ENCODE measurements at regions of chr5 and their contacts with region 1.

Region 1: GRCh38 chr5:158174918-158175851 is 316.2 kb upstream of the CLINT1 start:
- DNase-seq: peak; percentile 75
- CTCF ChIP-seq: peak; percentile 89

Region 2: DNA sequence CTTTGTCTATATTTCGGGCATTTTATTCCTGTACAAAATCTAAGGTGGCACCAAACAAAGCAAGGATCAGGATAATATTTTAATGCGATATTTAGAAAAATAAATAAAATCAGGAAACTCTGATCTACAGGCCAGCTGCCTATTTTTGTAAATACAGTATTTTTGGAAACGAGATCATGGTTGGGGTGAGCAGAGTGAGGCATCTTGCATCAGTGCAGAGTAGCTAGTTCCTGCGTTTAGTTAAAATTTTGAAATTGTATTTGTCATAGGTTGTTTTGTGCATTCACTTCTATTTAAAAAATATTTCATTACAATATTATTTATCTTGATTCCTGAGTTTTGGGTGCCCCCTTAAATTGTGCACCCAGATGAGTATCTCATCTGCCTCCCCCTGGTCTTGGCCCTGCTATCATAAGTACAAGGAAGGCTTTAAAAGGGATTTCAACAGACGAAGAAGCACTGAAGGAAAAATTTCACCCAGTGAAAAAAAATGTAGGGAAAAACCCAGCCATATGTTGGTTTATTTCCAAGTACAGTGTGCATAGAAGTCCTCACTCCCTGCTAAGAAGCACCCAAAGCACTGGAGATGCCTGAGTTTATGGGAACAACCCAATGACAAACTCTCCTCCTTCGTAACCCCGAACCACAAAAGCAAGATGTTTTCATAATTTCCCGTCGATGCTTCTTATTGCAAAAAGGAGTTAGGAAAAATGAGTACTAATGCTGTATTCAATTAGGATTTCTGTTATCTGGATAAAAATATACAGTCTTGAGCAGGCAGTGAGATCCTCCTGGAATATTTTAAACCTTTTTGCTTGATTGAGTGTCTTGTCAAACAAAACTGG is 11.5 kb before region 1 on chr5:
- CTCF ChIA-PET with region 1: interaction called, 14 read pairs
- POLR2A ChIA-PET with region 1: no interaction called
- DNase-seq: no peak
- CTCF ChIP-seq: no peak

Region 3: DNA sequence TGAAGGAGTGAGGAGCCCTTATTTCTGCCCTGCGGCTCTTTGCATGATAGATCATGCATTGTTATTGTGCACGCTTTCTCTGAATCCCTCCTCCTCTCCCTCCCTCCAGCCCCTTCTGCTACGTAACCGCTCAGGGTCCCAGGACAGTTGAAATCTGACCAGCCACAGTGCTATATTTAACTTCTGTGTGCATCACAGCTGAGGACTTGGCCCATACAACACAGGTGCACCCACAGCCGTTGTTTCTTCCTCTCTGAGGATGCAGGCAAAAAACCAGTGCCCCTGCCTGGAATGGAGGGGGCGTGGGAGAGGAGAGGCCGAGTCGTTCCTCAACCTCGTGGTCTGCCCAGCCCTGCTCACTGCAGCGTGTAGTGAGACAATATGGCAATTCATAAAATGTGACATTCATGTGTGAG is 19.4 kb after region 1 on chr5:
- CTCF ChIA-PET with region 1: interaction called, 11 read pairs
- POLR2A ChIA-PET with region 1: no interaction called
- DNase-seq: no peak
- CTCF ChIP-seq: no peak

Region 4: DNA sequence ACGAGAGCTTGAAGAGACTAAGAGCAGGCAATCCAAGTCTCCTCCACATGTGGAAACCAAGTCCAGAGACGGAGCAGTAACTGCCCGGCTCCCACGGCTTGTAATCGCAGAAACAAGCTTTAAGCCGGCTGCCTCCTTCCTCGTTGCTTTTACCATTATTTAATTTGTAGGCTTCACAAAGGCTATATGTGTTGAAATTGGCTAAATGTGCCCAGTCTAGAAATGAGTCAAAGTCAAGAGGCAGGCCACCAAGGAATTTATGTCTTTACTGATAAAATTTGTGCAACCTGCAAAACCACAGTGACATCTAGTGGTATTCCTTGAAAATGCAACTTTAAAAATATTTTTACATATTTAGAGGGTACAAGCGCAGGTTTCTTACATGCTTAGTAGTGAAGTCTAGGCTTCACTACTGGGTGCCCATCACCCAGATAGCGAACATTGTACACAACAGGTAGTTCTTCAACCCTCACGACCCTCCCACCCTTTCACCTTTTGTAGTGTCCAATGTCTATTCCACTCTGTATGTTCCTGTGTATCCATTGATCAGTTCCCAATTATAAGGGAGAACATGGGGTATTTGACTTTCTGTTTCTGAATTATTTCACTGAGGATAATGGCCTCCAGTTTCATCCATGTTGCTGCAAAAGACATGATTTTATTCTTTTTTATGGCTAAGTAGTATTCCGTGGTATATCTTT is 958.0 kb after region 1 on chr5:
- CTCF ChIA-PET with region 1: interaction called, 22 read pairs
- POLR2A ChIA-PET with region 1: no interaction called
- DNase-seq: peak; percentile 41
- CTCF ChIP-seq: peak; percentile 60

Measured in GM10248 (cell line).